OCI-LY7 (cell line): ENCODE measurements at regions of chr2 and their contacts with region 1.

Region 1: GRCh38 chr2:221153226-221153625 is 418.9 kb downstream of the EPHA4 start:
- DNase-seq: no peak
- H3K4me3 ChIP-seq: no peak overlapping the region
- H3K27ac ChIP-seq: no peak overlapping the region
- H3K4me1 ChIP-seq: peaks cover 8% of the 10 kb centered on the region
- CTCF ChIP-seq: no peak

Region 2: GRCh38 chr2:221137385-221137784 is 15.8 kb before region 1 on chr2:
- CTCF ChIA-PET with region 1: no interaction called
- POLR2A ChIA-PET with region 1: interaction called, 12 read pairs
- intact Hi-C with region 1: no loop called
- DNase-seq: peak; percentile 31
- H3K4me3 ChIP-seq: no peak overlapping the region
- H3K27ac ChIP-seq: no peak overlapping the region
- H3K4me1 ChIP-seq: peaks cover 28% of the 10 kb centered on the region
- CTCF ChIP-seq: no peak

Region 3: GRCh38 chr2:221318376-221319130 is 165.3 kb after region 1 on chr2:
- CTCF ChIA-PET with region 1: no interaction called
- POLR2A ChIA-PET with region 1: no interaction called
- intact Hi-C with region 1: no loop called
- DNase-seq: no peak
- H3K4me3 ChIP-seq: no peak overlapping the region
- H3K27ac ChIP-seq: no peak overlapping the region
- H3K4me1 ChIP-seq: no peaks in the 10 kb centered on the region
- CTCF ChIP-seq: no peak